Lower leg skin (tissue), 4 donors: ENCODE measurements at regions of chr9 and their contacts with region 1.

Region 1: DNA sequence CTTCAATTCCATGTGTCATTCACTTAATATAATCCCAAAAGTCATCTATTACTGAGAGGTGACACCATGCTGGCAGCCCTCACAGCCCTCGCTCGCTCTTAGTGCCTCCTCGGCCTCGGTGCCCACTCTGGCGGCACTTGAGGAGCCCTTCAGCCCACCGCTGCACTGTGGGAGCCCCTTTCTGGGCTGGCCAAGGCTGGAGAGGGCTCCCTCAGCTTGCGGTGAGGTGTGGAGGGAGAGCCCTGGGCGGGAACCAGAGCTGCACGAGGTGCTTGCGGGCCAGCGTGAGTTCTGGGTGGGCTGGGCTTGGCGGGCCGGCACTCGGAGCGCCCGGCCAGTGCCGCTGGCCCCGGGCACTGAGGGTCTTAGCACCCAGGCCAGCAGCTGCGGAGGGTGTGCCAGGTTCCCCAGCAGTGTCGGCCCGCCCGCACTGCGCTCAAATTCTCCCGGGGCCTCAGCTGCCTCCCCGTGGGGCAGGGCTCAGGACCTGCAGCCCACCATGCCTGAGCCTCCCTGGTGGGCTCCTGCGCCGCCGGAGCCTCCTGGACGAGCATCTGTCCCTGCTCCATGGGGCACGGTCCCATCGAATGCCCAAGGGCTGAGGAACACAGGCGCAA is 374.1 kb downstream of the ELAVL2 start:
- DNase-seq: no peak
- H3K4me3 ChIP-seq: no peak overlapping the region
- CTCF ChIP-seq: no peak
- POLR2A ChIP-seq: no peak

Region 2: GRCh38 chr9:23290973-23291372 is 160.9 kb before region 1 on chr9:
- intact Hi-C with region 1: no loop called
- DNase-seq: no peak
- H3K4me3 ChIP-seq: no peak overlapping the region
- CTCF ChIP-seq: no peak
- POLR2A ChIP-seq: no peak

Region 3: GRCh38 chr9:24932785-24933184 is 1480.9 kb after region 1 on chr9:
- intact Hi-C with region 1: loop called (anchors 10 kb)
- DNase-seq: no peak
- H3K4me3 ChIP-seq: no peak overlapping the region
- CTCF ChIP-seq: no peak
- POLR2A ChIP-seq: no peak